PC-3 (cell line): ENCODE measurements at regions of chr1 and their contacts with region 1.

Region 1: DNA sequence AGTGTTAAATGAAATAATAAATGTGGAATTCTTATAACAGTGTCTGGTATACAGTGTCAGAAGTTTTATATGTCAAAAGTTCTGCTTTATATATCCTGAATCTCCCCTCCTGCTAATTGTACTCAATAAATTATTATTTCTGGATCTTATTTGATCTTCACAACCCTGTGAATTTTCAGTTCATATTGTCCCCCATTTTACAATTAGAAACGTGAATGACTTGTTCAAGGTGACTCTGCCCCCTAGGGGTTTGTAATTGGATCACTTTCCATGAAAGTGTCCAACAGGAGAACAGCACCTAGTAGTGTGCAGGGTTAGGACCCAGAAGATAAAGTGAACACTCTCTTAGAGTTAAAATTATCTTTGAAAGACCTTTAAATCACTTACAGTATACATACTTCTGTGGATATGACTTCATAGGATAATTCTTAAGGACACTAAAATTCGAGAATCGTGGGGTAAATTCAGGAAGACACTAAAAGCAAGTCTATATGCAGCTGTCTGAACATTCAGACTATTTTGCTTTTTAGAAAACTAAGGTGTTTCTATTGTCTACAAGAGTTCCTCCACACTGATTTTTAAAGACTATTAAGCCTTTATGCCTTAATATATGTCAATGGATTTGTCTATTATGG is 4.5 kb upstream of the DDR2 start:
- DNase-seq: peak; percentile 70
- ATAC-seq: peak; percentile 75
- H3K4me3 ChIP-seq: no peak overlapping the region
- H3K27ac ChIP-seq: no peak overlapping the region
- H3K4me1 ChIP-seq: no peaks in the 10 kb centered on the region
- H3K27me3 ChIP-seq: no peaks in the 10 kb centered on the region
- CTCF ChIP-seq: peak; percentile 92

Region 2: DNA sequence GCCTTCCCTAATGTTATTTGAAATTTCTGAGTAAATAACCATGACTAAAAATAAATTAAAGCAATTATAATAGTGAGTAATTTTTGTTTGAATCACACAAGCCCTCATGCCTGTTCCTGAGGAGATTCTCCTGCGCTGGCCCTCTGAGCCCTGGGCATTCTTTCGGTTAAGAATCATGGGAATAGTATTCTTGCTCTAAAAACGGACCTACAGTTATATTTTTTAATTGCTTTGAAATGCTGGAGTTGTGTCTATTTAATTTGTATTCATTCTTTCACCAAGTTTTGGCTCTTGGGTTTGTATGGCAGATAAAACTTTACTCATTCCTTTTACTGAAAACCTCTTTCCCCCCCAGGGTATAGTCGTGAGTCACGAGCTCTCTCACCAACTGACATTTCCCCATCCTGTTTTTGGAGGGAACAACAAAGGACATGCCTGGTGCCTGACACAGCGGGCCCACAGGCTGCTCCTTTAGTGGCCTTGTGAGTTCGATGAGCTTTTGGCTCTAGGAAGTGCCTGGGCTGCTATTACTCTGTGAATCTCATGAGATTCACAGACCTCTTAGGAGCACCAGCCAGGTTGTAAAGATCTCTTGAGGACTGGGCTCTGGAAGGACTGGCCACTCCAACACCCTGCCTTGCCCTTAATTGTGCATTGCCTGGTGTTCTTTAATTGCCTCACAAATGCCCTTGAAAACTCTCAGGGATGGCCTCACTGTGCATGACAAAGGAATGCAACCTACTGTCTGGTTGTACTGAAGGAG is 63.1 kb after region 1 on chr1:
- CTCF ChIA-PET with region 1: no interaction called
- POLR2A ChIA-PET with region 1: no interaction called
- intact Hi-C with region 1: loop called (anchors 5 kb)
- DNase-seq: peak; percentile 98
- ATAC-seq: peak; percentile 91
- H3K4me3 ChIP-seq: peak overlapping the region; percentile 12; the same call in 1 of the 2 replicates
- H3K27ac ChIP-seq: peak overlapping the region; percentile 78
- H3K4me1 ChIP-seq: peaks cover 28% of the 10 kb centered on the region
- H3K27me3 ChIP-seq: no peaks in the 10 kb centered on the region
- CTCF ChIP-seq: no peak